ENCODE measurements at regions of chr19 and their contacts with region 1.

Region 1: GRCh38 chr19:36489118-36489919 is at the start of gene ZNF566:
- DNase-seq: peak; percentile 94 to 98
- H3K4me3 ChIP-seq: peak within 1 kb of the TSS; percentile 84 to 98 (median 94)
- H3K27ac ChIP-seq: peak within 1 kb of the TSS; percentile 95
- H3K4me1 ChIP-seq: no peaks in the 10 kb centered on the region; a peak in 1 of 7 replicates
- H3K27me3 ChIP-seq: no peaks in the 10 kb centered on the region
- CTCF ChIP-seq: peak in 1 of 3 experiments; percentile 20; a peak in 1 of 4 replicates
- EP300 ChIP-seq: peak in 1 of 2 experiments; percentile 23; a peak in 1 of 3 replicates
- POLR2A ChIP-seq: peak; percentile 85 to 88
- RAD21 ChIP-seq: no peak
- total RNA-seq, gene ZNF566: 16.1 and 16.6 TPM in 2 replicates

Region 2: DNA sequence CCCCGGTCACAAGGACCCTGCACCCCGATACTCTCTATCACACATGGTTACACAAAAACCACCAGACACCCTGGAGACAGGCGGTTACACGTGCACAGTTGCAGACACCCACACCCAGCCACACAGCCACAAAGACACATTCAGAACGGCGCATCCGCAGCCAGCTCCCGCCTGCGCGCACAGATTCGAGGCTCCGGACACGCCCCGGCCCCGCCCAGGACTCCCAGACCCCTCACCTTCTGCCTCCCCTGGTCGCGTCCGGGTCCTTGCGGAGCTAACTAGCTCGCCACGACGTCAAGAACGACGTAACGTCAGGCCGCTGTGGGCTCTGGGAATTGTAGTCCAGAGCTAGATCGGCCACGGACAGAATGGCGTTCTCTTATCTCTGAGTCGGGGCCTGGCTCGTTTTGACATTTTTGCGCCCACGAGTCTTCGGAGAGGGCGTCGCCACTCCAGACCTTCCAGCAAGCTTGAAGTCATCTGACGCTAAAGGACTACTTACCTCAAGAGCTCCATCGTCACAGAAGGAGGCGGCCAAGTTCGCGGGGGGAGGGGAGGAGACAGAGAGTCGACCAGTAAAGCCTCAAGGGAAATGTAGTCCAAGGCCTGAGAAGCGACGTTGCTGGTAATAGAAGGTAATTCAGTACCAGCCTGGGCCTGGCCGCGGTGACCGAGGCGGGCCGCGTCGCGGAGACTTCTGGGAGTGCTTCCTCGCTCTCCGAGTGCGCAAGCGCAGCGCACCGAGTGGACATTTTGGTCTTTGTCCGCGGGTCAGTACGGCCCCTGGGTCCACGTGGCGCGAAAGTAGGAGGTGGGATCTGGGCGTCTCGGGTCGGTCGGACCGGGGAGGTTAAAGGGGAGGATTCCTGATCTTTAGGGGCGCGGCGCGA is 274.7 kb before region 1 on chr19 and contains the starts of genes ZNF146 and ZNF565:
- CTCF ChIA-PET with region 1: no interaction called
- POLR2A ChIA-PET with region 1: interaction called, 10 read pairs
- DNase-seq: peak; percentile 91 to 95
- H3K4me3 ChIP-seq: peak within 1 kb of the TSS; percentile 85 to 92 (median 90)
- H3K27ac ChIP-seq: peak within 1 kb of the TSS; percentile 97
- H3K4me1 ChIP-seq: peaks cover 0 to 6% (median 2%) of the 10 kb centered on the region in 4 experiments; a peak in 5 of 7 replicates
- H3K27me3 ChIP-seq: no peaks in the 10 kb centered on the region
- CTCF ChIP-seq: no peak
- EP300 ChIP-seq: 0 out of 3 replicates have a peak, but pooled peaks of 1 of the 2 experiments have one; percentile 6
- POLR2A ChIP-seq: peak; percentile 74 to 93; a peak in 2 of 3 replicates
- RAD21 ChIP-seq: no peak
- total RNA-seq, gene ZNF146: 154 and 161 TPM in 2 replicates
- total RNA-seq, gene ZNF565: 2.7 and 3.1 TPM in 2 replicates

Region 3: GRCh38 chr19:36378625-36379509 is 110.5 kb before region 1 on chr19 and contains the start of gene ZFP14:
- CTCF ChIA-PET with region 1: no interaction called
- POLR2A ChIA-PET with region 1: interaction called, 31 read pairs
- DNase-seq: peak; percentile 82 to 91
- H3K4me3 ChIP-seq: peak within 1 kb of the TSS; percentile 50 to 92 (median 86)
- H3K27ac ChIP-seq: peak within 1 kb of the TSS; percentile 47; the same call in 1 of the 2 replicates
- H3K4me1 ChIP-seq: no peaks in the 10 kb centered on the region; a peak in 1 of 7 replicates
- H3K27me3 ChIP-seq: no peaks in the 10 kb centered on the region
- CTCF ChIP-seq: peak in 2 of 3 experiments; percentile 7 to 15; a peak in 2 of 4 replicates
- EP300 ChIP-seq: 0 out of 3 replicates have a peak, but pooled peaks of 1 of the 2 experiments have one; percentile 50
- POLR2A ChIP-seq: peak in 1 of 2 experiments; percentile 55; a peak in 2 of 3 replicates
- RAD21 ChIP-seq: peak; percentile 39 to 51
- total RNA-seq, gene ZFP14: 8.2 and 8.8 TPM in 2 replicates

Region 4: DNA sequence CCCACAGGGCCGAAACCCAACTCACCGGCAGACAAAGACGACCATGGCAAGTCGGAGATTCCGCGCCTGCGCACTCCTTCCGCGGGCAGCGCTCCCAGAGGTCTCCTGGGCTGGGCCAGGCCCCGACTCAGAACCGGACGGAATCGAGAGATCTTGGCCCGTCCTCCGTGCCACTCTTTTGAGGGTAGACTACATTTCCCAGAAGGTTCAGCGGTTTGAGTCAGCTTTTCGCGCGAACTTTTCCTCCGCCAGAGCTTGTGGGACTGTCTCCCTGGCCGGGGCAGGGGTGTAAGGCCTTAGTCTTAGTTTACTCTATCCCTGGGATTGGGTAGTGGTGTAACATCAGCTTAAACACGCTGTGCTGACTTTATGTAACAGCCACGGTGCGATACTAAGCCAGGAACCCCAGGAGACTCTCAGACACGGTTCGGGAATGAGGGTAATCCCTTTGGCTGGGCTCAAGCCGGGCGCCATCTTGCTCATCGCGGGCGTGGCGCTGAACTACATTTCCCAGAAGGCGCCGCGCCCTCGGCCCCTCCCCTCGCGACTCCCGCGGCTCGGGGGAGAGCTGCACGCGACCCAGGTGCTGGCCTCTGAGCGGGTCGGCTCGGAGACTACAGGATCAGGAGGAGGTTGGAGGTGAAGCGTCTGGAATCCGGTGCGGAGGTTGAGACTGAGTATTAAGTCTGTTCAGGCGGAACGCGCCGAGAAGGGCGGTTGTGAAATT is 39.0 kb after region 1 on chr19 and contains the start of gene ZNF260:
- CTCF ChIA-PET with region 1: interaction called, 3 read pairs
- POLR2A ChIA-PET with region 1: interaction called, 72 read pairs
- DNase-seq: peak; percentile 92 to 96
- H3K4me3 ChIP-seq: peak within 1 kb of the TSS; percentile 72 to 98 (median 85)
- H3K27ac ChIP-seq: peak within 1 kb of the TSS; percentile 99
- H3K4me1 ChIP-seq: peaks cover 0 to 4% (median 2%) of the 10 kb centered on the region in 4 experiments; a peak in 6 of 7 replicates
- H3K27me3 ChIP-seq: no peaks in the 10 kb centered on the region
- CTCF ChIP-seq: no peak
- EP300 ChIP-seq: 0 out of 3 replicates have a peak, but pooled peaks of 1 of the 2 experiments have one; percentile 8
- POLR2A ChIP-seq: peak; percentile 80 to 84; a peak in 2 of 3 replicates
- RAD21 ChIP-seq: no peak
- total RNA-seq, gene ZNF260: 30.7 and 32.3 TPM in 2 replicates

Region 5: GRCh38 chr19:36547001-36547732 is 57.8 kb after region 1 on chr19:
- CTCF ChIA-PET with region 1: no interaction called
- POLR2A ChIA-PET with region 1: no interaction called
- DNase-seq: no peak
- H3K4me3 ChIP-seq: no peak overlapping the region
- H3K27ac ChIP-seq: no peak overlapping the region
- H3K4me1 ChIP-seq: no peaks in the 10 kb centered on the region
- H3K27me3 ChIP-seq: no peaks in the 10 kb centered on the region
- CTCF ChIP-seq: no peak
- EP300 ChIP-seq: no peak
- POLR2A ChIP-seq: no peak
- RAD21 ChIP-seq: no peak

Region 6: DNA sequence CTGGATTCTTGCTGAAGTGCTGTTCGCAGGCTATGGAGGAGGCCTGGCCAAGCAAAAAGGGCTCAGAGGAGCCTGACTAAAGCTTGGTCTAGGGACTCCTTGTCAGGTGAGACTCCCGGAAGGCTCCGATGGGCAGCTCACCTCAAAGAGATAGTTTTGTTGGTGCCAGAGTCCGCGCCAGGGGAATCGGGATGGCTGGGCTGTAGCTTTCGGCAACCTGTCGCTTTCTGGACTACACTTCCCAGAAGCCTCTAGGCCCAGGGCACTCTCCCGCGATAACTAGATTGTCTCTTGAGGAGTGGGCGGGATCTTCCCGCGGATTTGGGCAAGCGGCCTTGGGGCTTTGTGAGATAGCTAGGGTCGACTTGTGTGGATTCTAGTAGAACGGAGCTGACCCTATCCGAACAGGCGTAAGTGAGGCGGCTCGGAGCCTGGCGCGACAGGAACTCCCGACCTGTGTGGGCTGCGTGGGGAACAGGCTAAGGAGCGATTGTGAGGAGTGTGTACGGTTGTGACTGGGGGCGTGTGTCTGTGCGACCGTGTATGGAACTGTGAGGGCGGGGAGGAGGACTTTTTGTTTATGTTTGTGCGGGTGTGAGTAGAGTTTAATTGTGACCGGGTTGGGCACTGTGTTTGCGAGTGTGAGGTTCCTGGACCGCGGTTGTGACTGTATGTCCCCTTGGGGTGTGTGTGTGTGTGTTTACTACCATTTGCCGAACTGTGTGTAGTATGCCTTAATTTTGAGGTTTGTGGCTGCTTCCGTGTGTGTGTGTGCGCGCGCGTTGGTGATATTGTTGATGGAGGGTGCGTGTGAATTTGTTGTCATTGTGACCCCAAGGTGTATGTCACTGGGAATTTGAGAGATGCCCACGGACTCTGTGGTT is 361.5 kb after region 1 on chr19 and contains the start of gene ZNF345:
- CTCF ChIA-PET with region 1: no interaction called
- POLR2A ChIA-PET with region 1: interaction called, 10 read pairs
- DNase-seq: peak in 1 of 2 experiments; percentile 86
- H3K4me3 ChIP-seq: peak within 1 kb of the TSS; percentile 89 to 99 (median 96)
- H3K27ac ChIP-seq: peak within 1 kb of the TSS; percentile 85
- H3K4me1 ChIP-seq: peaks cover 0 to 2% (median 0%) of the 10 kb centered on the region in 4 experiments; a peak in 3 of 7 replicates
- H3K27me3 ChIP-seq: no peaks in the 10 kb centered on the region
- CTCF ChIP-seq: no peak
- EP300 ChIP-seq: no peak
- POLR2A ChIP-seq: peak; percentile 64 to 85; a peak in 2 of 3 replicates
- RAD21 ChIP-seq: no peak
- total RNA-seq, gene ZNF345: 5.1 TPM in 2 replicates